ENCODE measurements at regions of chr4 and their contacts with region 1.

Region 1: GRCh38 chr4:129176864-129177263 is 80.9 kb downstream of the C4orf33 start:
- DNase-seq: no peak
- H3K4me3 ChIP-seq: no peak overlapping the region
- H3K27ac ChIP-seq: no peak overlapping the region
- H3K4me1 ChIP-seq: no peaks in the 10 kb centered on the region
- H3K27me3 ChIP-seq: no peaks in the 10 kb centered on the region
- CTCF ChIP-seq: no peak
- EP300 ChIP-seq: no peak
- POLR2A ChIP-seq: no peak

Region 2: DNA sequence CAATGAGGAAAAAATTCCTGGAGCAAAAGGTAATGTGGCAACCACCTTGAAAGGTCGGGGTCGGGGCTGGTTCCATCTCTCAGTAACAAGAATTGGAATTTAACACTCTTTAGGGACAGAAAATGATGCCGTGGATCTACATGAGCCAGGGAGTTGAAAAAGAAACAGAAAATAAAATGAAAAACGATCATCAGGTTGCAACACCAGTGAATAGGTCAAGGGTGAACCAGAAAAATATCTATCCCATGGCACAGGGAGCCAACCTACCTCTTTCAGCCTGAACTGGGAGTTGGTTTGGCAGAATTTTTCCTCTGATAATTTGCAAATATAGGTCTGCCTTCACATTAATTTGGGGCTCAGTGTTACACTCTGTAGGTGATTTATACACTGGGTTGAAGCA is 12.8 kb after region 1 on chr4:
- intact Hi-C with region 1: no loop called
- DNase-seq: no peak
- H3K4me3 ChIP-seq: no peak overlapping the region
- H3K27ac ChIP-seq: no peak overlapping the region
- H3K4me1 ChIP-seq: no peaks in the 10 kb centered on the region
- H3K27me3 ChIP-seq: no peaks in the 10 kb centered on the region
- CTCF ChIP-seq: no peak
- EP300 ChIP-seq: no peak
- POLR2A ChIP-seq: no peak

Region 3: GRCh38 chr4:129708784-129709183 is 531.9 kb after region 1 on chr4:
- intact Hi-C with region 1: no loop called
- DNase-seq: no peak
- H3K4me3 ChIP-seq: no peak overlapping the region
- H3K27ac ChIP-seq: no peak overlapping the region
- H3K4me1 ChIP-seq: no peaks in the 10 kb centered on the region
- H3K27me3 ChIP-seq: no peaks in the 10 kb centered on the region
- CTCF ChIP-seq: no peak
- EP300 ChIP-seq: no peak
- POLR2A ChIP-seq: no peak

Region 4: GRCh38 chr4:130349745-130350144 is 1172.9 kb after region 1 on chr4:
- intact Hi-C with region 1: loop called in 1 of 4 experiments (anchors 5 kb)
- DNase-seq: no peak
- H3K4me3 ChIP-seq: no peak overlapping the region
- H3K27ac ChIP-seq: no peak overlapping the region
- H3K4me1 ChIP-seq: no peaks in the 10 kb centered on the region
- H3K27me3 ChIP-seq: no peaks in the 10 kb centered on the region
- CTCF ChIP-seq: no peak
- EP300 ChIP-seq: no peak
- POLR2A ChIP-seq: no peak